Mammary epithelial cell (primary cell): ENCODE measurements at regions of chr9 and their contacts with region 1.

Region 1: DNA sequence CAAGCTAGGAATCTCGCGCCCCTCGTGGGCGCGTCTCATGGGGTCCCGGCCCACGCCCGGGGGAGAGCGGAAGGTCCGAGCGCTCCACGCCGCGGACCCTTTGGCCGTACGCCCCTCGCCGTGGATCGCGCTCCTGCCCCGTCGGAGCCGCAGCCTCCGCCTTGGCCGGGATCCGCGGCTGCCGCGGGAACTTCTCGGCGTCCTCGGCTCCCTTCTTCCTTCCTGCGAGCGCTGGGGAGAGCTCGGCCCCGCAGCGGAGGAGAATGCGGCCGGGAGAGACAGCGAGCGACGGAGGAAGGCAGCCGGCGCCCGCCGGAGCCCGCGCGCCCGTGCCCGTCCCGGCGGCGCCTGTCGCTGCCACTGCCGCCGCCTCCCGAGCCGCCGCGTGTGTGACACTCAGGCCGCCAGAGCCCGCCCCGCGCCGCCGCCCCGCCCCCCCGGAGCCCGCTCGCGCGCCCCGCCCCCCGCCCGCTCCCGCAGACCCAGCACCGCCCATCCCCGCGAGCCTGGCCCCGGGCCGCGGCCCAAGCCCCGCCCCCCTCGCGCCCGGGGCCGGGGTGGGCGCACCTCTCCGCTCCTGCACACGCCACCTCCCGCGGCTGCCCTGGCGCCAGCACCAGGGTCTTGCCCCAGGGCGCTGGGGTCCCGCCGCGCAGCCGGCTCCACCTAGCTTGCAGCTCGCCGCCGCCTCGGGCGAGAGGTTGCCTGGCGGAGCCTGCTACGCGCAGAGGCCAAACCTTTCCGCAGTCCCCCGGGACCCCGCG is at the start of gene SHB:
- DNase-seq: peak; percentile 58
- H3K4me3 ChIP-seq: peak within 1 kb of the TSS; percentile 79 to 90 (median 84)
- H3K27ac ChIP-seq: peak within 1 kb of the TSS; percentile 44
- H3K4me1 ChIP-seq: peaks cover 21% of the 10 kb centered on the region
- H3K27me3 ChIP-seq: no peaks in the 10 kb centered on the region
- CTCF ChIP-seq: no peak
- total RNA-seq, gene SHB: 30.5 to 31.5 TPM

Region 2: GRCh38 chr9:37903647-37904444 is 165.2 kb before region 1 on chr9 and contains the start of gene SLC25A51:
- CTCF ChIA-PET with region 1: no interaction called
- dilution Hi-C with region 1: no loop called
- in situ Hi-C with region 1: no loop called
- intact Hi-C with region 1: loop called (anchors 1 kb)
- DNase-seq: peak; percentile 94
- H3K4me3 ChIP-seq: peak within 1 kb of the TSS; percentile 60 to 83 (median 78)
- H3K27ac ChIP-seq: peak within 1 kb of the TSS; percentile 67
- H3K4me1 ChIP-seq: peaks cover 25% of the 10 kb centered on the region
- H3K27me3 ChIP-seq: no peaks in the 10 kb centered on the region
- CTCF ChIP-seq: peak; percentile 92 to 98
- total RNA-seq, gene SLC25A51: 30.0 to 78.0 TPM

Region 3: GRCh38 chr9:37920471-37921167 is 148.4 kb before region 1 on chr9:
- CTCF ChIA-PET with region 1: no interaction called
- dilution Hi-C with region 1: no loop called
- in situ Hi-C with region 1: no loop called
- intact Hi-C with region 1: loop called (anchors 1 kb)
- DNase-seq: no peak
- H3K4me3 ChIP-seq: no peak overlapping the region
- H3K27ac ChIP-seq: no peak overlapping the region
- H3K4me1 ChIP-seq: peaks cover 29% of the 10 kb centered on the region
- H3K27me3 ChIP-seq: no peaks in the 10 kb centered on the region
- CTCF ChIP-seq: no peak

Region 4: GRCh38 chr9:38017149-38017884 is 51.7 kb before region 1 on chr9:
- CTCF ChIA-PET with region 1: interaction called, 3 read pairs
- dilution Hi-C with region 1: no loop called
- in situ Hi-C with region 1: no loop called
- intact Hi-C with region 1: loop called (anchors 1 kb)
- DNase-seq: peak; percentile 52
- H3K4me3 ChIP-seq: no peak overlapping the region
- H3K27ac ChIP-seq: peak overlapping the region; percentile 44
- H3K4me1 ChIP-seq: peaks cover 54% of the 10 kb centered on the region
- H3K27me3 ChIP-seq: no peaks in the 10 kb centered on the region
- CTCF ChIP-seq: peak; percentile 20 to 68

Region 5: GRCh38 chr9:38047301-38048251 is 21.5 kb before region 1 on chr9:
- CTCF ChIA-PET with region 1: no interaction called
- dilution Hi-C with region 1: no loop called
- in situ Hi-C with region 1: no loop called
- intact Hi-C with region 1: loop called (anchors 1 kb)
- DNase-seq: peak; percentile 81
- H3K4me3 ChIP-seq: peak overlapping the region in 1 of 3 experiments; percentile 12
- H3K27ac ChIP-seq: peak overlapping the region; percentile 76
- H3K4me1 ChIP-seq: peaks cover 51% of the 10 kb centered on the region
- H3K27me3 ChIP-seq: no peaks in the 10 kb centered on the region
- CTCF ChIP-seq: no peak

Region 6: DNA sequence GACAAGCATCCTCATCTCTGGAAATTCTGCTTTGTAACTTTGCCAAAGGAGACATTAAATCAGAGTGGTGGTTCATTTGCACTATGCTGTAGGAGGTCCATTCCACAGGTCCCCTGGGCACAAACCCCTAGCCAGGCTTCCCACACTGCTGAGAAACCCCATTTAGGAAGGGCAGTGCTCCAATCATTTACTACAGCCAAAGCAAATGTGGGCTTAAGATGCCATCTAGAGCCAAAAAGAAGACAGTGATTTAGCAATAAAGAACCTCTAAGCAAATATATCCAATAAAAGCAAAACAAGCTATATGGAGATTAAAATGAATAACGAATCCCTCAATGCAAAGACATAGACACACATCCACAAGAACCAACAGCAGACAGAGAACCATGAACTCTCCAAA is 194.5 kb after region 1 on chr9:
- CTCF ChIA-PET with region 1: no interaction called
- dilution Hi-C with region 1: no loop called
- in situ Hi-C with region 1: loop called in 1 of 2 experiments (anchors 10 kb)
- intact Hi-C with region 1: loop called (anchors 1 kb)
- DNase-seq: peak; percentile 31
- H3K4me3 ChIP-seq: no peak overlapping the region
- H3K27ac ChIP-seq: no peak overlapping the region
- H3K4me1 ChIP-seq: no peaks in the 10 kb centered on the region
- H3K27me3 ChIP-seq: no peaks in the 10 kb centered on the region
- CTCF ChIP-seq: peak; percentile 41 to 61

Region 7: GRCh38 chr9:38392235-38393127 is 323.4 kb after region 1 on chr9 and contains the start of gene ALDH1B1:
- CTCF ChIA-PET with region 1: no interaction called
- dilution Hi-C with region 1: no loop called
- in situ Hi-C with region 1: loop called in 1 of 2 experiments (anchors 25 kb)
- intact Hi-C with region 1: no loop called
- DNase-seq: peak; percentile 80
- H3K4me3 ChIP-seq: peak within 1 kb of the TSS; percentile 68 to 73 (median 72)
- H3K27ac ChIP-seq: peak within 1 kb of the TSS; percentile 25
- H3K4me1 ChIP-seq: no peaks in the 10 kb centered on the region
- H3K27me3 ChIP-seq: no peaks in the 10 kb centered on the region
- CTCF ChIP-seq: peak in 1 of 2 donors; percentile 17
- total RNA-seq, gene ALDH1B1: 30.0 to 69.8 TPM

Region 8: DNA sequence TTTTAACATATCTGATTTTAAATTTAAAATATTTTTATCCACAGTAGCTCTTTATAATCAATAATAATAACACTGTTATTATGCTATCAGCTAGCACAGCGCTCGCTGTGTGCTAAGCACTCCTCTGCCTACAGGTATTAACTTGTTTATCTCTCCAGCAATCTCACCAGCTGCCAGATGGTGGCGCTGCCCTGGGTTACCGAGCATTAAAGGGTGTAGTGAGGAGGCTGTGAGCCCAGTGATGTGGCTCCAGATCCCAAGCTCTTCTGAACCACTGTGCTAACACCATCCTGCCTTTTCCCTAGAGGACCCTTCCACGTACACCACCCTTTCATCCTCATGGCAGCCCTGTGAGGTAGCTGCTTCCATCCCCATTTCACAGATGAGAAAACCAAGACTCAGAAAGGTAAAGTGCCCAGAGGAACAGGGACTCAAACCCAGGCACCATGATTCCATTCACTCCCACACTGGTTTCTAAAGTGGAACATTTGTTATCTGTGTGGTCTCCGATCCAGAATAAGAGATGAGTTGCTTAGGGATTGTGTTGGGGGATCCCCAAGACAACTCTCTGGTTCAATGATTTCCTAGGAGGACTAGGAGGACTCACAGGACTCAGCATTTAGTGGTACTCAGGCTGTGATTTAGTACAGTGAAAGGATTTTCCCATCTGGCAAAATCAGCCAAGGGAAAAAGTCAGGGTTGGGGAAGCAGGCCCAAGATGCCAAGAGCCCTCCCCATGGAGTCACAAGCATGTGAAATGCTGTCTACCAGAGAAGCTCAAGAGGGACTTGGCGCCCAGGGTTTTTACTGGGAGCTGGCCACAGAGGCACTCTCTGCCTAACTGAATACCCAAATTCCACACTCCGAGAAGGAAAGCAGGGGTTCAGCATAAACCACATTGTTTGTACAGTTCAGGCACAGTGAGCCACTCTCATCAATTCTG is 348.2 kb after region 1 on chr9:
- CTCF ChIA-PET with region 1: no interaction called
- dilution Hi-C with region 1: no loop called
- in situ Hi-C with region 1: no loop called
- intact Hi-C with region 1: no loop called
- DNase-seq: peak; percentile 17
- H3K4me3 ChIP-seq: no peak overlapping the region
- H3K27ac ChIP-seq: no peak overlapping the region
- H3K4me1 ChIP-seq: no peaks in the 10 kb centered on the region
- H3K27me3 ChIP-seq: no peaks in the 10 kb centered on the region
- CTCF ChIP-seq: peak; percentile 69 to 79